Gastrocnemius medialis (tissue), 4 donors: ENCODE measurements at regions of chr15 and their contacts with region 1.

Region 1: GRCh38 chr15:59688841-59689625 is at the start of gene BNIP2:
- DNase-seq: peak; percentile 98 to 99
- ATAC-seq: peak; percentile 94 to 95
- H3K4me3 ChIP-seq: peak within 1 kb of the TSS; percentile 87 to 99 (median 98)
- H3K27ac ChIP-seq: peak within 1 kb of the TSS; percentile 96 to 100 (median 98)
- H3K4me1 ChIP-seq: peaks cover 38 to 52% of the 10 kb centered on the region in 2 donors
- H3K27me3 ChIP-seq: no peaks in the 10 kb centered on the region
- CTCF ChIP-seq: no peak
- POLR2A ChIP-seq: peak; percentile 93 to 96
- total RNA-seq, gene BNIP2: 120 to 147 (median 137) TPM

Region 2: GRCh38 chr15:59656897-59657634 is 32.0 kb before region 1 on chr15 and contains the start of gene GTF2A2:
- in situ Hi-C with region 1: no loop called
- intact Hi-C with region 1: loop called (anchors 1 kb)
- DNase-seq: peak; percentile 87 to 90
- ATAC-seq: peak; percentile 99
- H3K4me3 ChIP-seq: peak within 1 kb of the TSS; percentile 93 to 99 (median 96)
- H3K27ac ChIP-seq: peak within 1 kb of the TSS; percentile 84 to 94 (median 88)
- H3K4me1 ChIP-seq: peaks cover 15 to 24% of the 10 kb centered on the region in 2 donors
- H3K27me3 ChIP-seq: no peaks in the 10 kb centered on the region
- CTCF ChIP-seq: no peak
- POLR2A ChIP-seq: peak; percentile 66 to 70
- total RNA-seq, gene GTF2A2: 37.9 to 86.0 (median 53.5) TPM

Region 3: GRCh38 chr15:59725172-59725486 is 36.1 kb after region 1 on chr15:
- in situ Hi-C with region 1: no loop called
- intact Hi-C with region 1: loop called (anchors 1 kb)
- DNase-seq: no peak
- ATAC-seq: no peak
- H3K4me3 ChIP-seq: no peak overlapping the region
- H3K27ac ChIP-seq: peak overlapping the region; percentile 44 to 71 (median 59)
- H3K4me1 ChIP-seq: peaks cover 3 to 11% of the 10 kb centered on the region in 2 donors
- H3K27me3 ChIP-seq: no peaks in the 10 kb centered on the region
- CTCF ChIP-seq: peak in 1 of 5 experiments; percentile 5
- POLR2A ChIP-seq: no peak

Region 4: DNA sequence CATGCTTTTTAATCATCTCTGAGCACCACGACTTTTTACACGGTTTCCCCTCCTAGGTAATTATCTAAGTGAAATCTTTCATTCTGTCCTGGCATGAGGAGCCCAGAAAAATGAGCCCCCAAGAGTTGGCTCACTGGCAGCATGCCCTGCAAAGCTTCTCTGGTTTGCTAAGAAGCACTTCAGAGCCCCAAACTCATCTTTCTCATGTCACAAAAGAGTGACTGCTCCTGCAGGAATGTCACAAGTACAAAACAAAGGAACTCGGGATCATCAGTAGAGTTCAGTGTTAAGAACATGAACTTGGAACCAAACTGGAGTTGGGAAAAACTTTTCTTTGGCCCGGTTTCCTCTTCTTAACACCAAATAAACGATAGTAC is 439.0 kb after region 1 on chr15:
- in situ Hi-C with region 1: no loop called
- intact Hi-C with region 1: loop called (anchors 1 kb)
- DNase-seq: no peak
- ATAC-seq: peak; percentile 23 to 33
- H3K4me3 ChIP-seq: peak overlapping the region; percentile 55 to 63 (median 58)
- H3K27ac ChIP-seq: peak overlapping the region; percentile 32 to 61 (median 56)
- H3K4me1 ChIP-seq: peaks cover 5 to 6% of the 10 kb centered on the region in 2 donors
- H3K27me3 ChIP-seq: no peaks in the 10 kb centered on the region
- CTCF ChIP-seq: no peak
- POLR2A ChIP-seq: no peak

Region 5: GRCh38 chr15:60326824-60327654 is 638.0 kb after region 1 on chr15:
- in situ Hi-C with region 1: loop called in 2 of 4 experiments (anchors 10 kb)
- intact Hi-C with region 1: no loop called
- DNase-seq: no peak
- ATAC-seq: peak in 1 of 2 donors; percentile 53
- H3K4me3 ChIP-seq: no peak overlapping the region
- H3K27ac ChIP-seq: no peak overlapping the region
- H3K4me1 ChIP-seq: peaks cover 0 to 4% of the 10 kb centered on the region in 2 donors
- H3K27me3 ChIP-seq: peaks cover 0 to 2% (median 0%) of the 10 kb centered on the region in 3 donors
- CTCF ChIP-seq: peak; percentile 51 to 85 (median 80)
- POLR2A ChIP-seq: no peak

Region 6: GRCh38 chr15:60469893-60470641 is 781.0 kb after region 1 on chr15:
- in situ Hi-C with region 1: loop called in 1 of 4 experiments (anchors 25 kb)
- intact Hi-C with region 1: no loop called
- DNase-seq: no peak
- ATAC-seq: no peak
- H3K4me3 ChIP-seq: no peak overlapping the region
- H3K27ac ChIP-seq: peak overlapping the region; percentile 2 to 41 (median 20)
- H3K4me1 ChIP-seq: peaks cover 13 to 24% of the 10 kb centered on the region in 2 donors
- H3K27me3 ChIP-seq: no peaks in the 10 kb centered on the region
- CTCF ChIP-seq: no peak
- POLR2A ChIP-seq: no peak